ENCODE measurements at regions of chr1 and their contacts with region 1.

Region 1: GRCh38 chr1:155934097-155934935 is at the start of gene KHDC4:
- DNase-seq: peak; percentile 85
- ATAC-seq: peak; percentile 93
- H3K4me3 Mint-ChIP-seq: no peak within 1 kb of the TSS
- H3K27ac Mint-ChIP-seq: no peak within 1 kb of the TSS
- H3K4me1 Mint-ChIP-seq: peaks cover 41% of the 10 kb centered on the region
- H3K27me3 Mint-ChIP-seq: no peaks in the 10 kb centered on the region
- CTCF ChIP-seq: no peak
- total RNA-seq, gene KHDC4: 88.3 and 105 TPM in 2 replicates

Region 2: GRCh38 chr1:155859234-155859829 is 75.0 kb before region 1 on chr1 and contains the start of gene SYT11:
- CTCF ChIA-PET with region 1: no interaction called
- POLR2A ChIA-PET with region 1: interaction called, 7 read pairs
- intact Hi-C with region 1: loop called (anchors 1 kb)
- DNase-seq: peak; percentile 82
- ATAC-seq: peak; percentile 91
- H3K4me3 Mint-ChIP-seq: peak within 1 kb of the TSS; percentile 98
- H3K27ac Mint-ChIP-seq: peak within 1 kb of the TSS; percentile 97
- H3K4me1 Mint-ChIP-seq: peaks cover 49% of the 10 kb centered on the region
- H3K27me3 Mint-ChIP-seq: peaks cover 2% of the 10 kb centered on the region
- CTCF ChIP-seq: no peak
- total RNA-seq, gene SYT11: 3.3 and 3.7 TPM in 2 replicates

Region 3: DNA sequence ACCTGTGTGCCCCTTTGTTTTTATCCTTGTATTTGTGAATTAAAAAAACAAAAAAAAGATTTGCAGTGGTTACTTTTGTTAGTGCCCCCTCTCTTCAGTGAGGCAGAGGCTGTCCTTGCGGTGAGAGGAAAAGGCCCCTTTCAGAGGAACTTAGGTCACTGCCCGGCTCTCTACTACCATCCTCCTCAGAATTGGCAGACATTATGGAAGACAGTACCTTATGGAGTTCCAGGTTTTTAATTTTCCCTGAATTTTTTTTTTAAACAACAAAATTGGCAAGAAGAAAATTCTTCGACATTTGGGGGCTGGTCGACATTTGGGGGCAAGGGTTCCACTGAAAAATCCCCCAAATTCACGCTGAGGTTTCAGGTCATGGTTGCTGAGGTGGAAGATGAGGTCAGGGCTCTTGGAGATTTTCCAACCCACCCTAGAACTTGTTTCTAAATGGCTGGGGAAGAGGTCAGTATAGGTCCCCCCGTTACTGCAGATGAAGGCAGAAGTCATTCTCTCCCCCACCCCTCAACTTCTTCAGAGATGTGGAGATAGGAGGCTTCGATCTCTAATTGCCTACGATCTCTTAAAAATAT is 12.4 kb after region 1 on chr1:
- CTCF ChIA-PET with region 1: interaction called, 8 read pairs
- POLR2A ChIA-PET with region 1: interaction called, 52 read pairs
- intact Hi-C with region 1: loop called (anchors 1 kb)
- DNase-seq: no peak
- ATAC-seq: peak; percentile 7
- H3K4me3 Mint-ChIP-seq: peak overlapping the region; percentile 46
- H3K27ac Mint-ChIP-seq: peak overlapping the region; percentile 92
- H3K4me1 Mint-ChIP-seq: peaks cover 60% of the 10 kb centered on the region
- H3K27me3 Mint-ChIP-seq: no peaks in the 10 kb centered on the region
- CTCF ChIP-seq: no peak

Region 4: DNA sequence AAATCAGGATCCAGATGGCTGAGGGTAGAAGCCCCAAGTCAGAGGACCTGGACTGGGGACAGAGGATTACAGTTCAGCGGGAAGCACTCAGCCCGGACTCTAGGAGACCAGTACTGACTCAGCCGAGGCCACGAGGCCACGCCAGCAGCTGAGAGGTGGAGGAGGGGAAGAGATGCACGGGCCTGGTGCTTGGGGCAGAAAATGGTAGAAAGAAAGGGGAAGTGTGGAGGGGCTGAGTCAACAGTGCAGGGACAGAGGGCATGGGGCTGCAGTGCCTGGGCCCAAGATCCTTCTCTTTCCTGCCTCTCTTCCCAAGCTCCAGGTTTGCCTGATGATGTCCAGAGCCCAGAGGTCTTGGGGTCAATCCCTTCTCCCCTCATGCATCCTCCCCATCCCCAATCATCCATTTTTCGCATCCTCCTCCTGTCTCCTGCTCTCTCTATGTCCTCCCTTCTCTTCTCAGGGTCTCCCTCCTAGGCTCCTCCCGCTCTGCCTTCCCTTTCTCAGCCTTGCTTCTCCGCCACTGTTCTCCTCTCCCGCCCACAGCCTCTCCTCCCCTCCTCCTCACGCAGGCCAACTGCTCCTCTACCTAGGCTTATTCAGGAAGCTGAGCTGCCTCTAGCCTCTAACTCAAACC is 36.3 kb after region 1 on chr1:
- CTCF ChIA-PET with region 1: interaction called, 7 read pairs
- POLR2A ChIA-PET with region 1: interaction called, 403 read pairs
- intact Hi-C with region 1: no loop called
- DNase-seq: peak; percentile 61
- ATAC-seq: peak; percentile 97
- H3K4me3 Mint-ChIP-seq: peak overlapping the region; percentile 73
- H3K27ac Mint-ChIP-seq: peak overlapping the region; percentile 90
- H3K4me1 Mint-ChIP-seq: peaks cover 98% of the 10 kb centered on the region
- H3K27me3 Mint-ChIP-seq: no peaks in the 10 kb centered on the region
- CTCF ChIP-seq: no peak

Region 5: DNA sequence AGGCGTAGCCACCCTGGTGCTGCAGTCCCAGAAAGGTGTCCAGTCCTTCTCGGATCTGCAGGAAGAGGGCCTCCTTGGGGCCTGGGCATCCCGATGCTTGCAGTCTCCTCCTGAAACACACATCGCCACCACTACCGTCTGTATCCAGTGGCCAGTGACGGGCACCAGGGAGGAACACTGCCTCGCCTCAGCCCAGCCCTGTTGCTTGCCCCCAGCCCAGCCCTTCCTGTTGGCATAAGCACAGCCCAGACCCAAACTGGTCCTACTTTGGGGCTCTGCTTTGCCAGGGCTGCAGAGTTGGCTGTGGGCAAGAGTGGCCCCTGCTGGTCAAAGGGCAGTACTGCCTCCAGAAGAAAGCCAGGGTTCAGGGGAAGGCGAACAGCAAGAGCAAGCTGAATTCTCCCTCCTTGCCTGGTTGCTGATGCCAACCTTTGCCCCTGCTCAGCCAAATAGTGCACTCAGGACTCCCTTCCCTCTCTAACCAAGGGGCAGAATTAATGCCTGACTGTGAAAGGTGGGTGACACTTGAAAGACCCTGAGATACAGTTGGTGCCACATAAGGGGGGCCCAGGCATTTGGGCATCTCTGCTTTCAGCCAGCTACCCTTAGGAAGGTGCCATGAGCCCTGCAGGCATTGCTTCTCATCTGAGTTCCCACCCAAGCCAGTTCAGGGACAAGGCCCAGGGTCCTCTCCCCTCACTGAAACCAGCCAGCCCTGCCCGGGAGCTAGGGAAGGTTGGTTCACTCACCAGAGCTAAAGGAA is 55.1 kb after region 1 on chr1:
- CTCF ChIA-PET with region 1: interaction called, 146 read pairs
- POLR2A ChIA-PET with region 1: interaction called, 403 read pairs
- intact Hi-C with region 1: loop called (anchors 1 kb)
- DNase-seq: peak; percentile 73
- ATAC-seq: peak; percentile 99
- H3K4me3 Mint-ChIP-seq: no peak overlapping the region
- H3K27ac Mint-ChIP-seq: peak overlapping the region; percentile 70
- H3K4me1 Mint-ChIP-seq: peaks cover 22% of the 10 kb centered on the region
- H3K27me3 Mint-ChIP-seq: no peaks in the 10 kb centered on the region
- CTCF ChIP-seq: peak; percentile 43

Region 6: GRCh38 chr1:156338180-156338973 is 404.1 kb after region 1 on chr1 and contains the starts of genes CCT3 and TSACC:
- CTCF ChIA-PET with region 1: no interaction called
- POLR2A ChIA-PET with region 1: no interaction called
- intact Hi-C with region 1: loop called (anchors 1 kb)
- DNase-seq: peak; percentile 99
- ATAC-seq: peak; percentile 95
- H3K4me3 Mint-ChIP-seq: peak within 1 kb of the TSS; percentile 97
- H3K27ac Mint-ChIP-seq: peak within 1 kb of the TSS; percentile 97
- H3K4me1 Mint-ChIP-seq: peaks cover 40% of the 10 kb centered on the region
- H3K27me3 Mint-ChIP-seq: no peaks in the 10 kb centered on the region
- CTCF ChIP-seq: no peak
- total RNA-seq, gene CCT3: 255 and 260 TPM in 2 replicates
- total RNA-seq, gene TSACC: 0.44 TPM in 1 of 2 replicates, not detected in the other